ENCODE measurements at regions of chr4 and their contacts with region 1.

Region 1: GRCh38 chr4:86544310-86544966 is 49.7 kb upstream of the PTPN13 start:
- DNase-seq: no peak
- ATAC-seq: no peak
- H3K4me3 ChIP-seq: no peak overlapping the region
- H3K27ac ChIP-seq: peak overlapping the region in 4 of 12 donors; percentile 14 to 67 (median 37)
- H3K4me1 ChIP-seq: peaks cover 0 to 32% (median 8%) of the 10 kb centered on the region in 12 donors
- H3K27me3 ChIP-seq: peaks cover 0 to 7% (median 0%) of the 10 kb centered on the region in 9 donors
- CTCF ChIP-seq: no peak
- POLR2A ChIP-seq: no peak

Region 2: DNA sequence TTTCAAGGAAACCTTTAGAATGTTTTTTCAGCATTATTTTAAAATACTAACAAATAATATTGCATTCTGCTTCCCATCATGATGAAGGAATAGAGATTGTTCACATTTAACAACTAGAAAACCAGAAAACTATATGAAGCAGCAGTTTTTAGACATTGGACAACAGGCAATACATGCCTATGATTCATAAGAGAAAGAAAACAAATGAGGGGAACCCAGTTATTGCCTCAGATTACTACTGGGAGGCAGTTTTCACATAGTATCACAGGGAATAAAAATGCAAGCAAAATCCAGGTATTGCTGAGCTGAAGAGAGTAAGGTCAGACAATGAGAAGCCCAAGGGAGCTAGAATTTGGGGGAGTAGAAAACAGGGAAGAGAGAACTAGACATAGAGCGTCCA is 558.2 kb before region 1 on chr4:
- intact Hi-C with region 1: no loop called
- DNase-seq: no peak
- ATAC-seq: no peak
- H3K4me3 ChIP-seq: no peak overlapping the region
- H3K27ac ChIP-seq: no peak overlapping the region
- H3K4me1 ChIP-seq: no peaks in the 10 kb centered on the region
- H3K27me3 ChIP-seq: no peaks in the 10 kb centered on the region
- CTCF ChIP-seq: no peak
- POLR2A ChIP-seq: no peak

Region 3: DNA sequence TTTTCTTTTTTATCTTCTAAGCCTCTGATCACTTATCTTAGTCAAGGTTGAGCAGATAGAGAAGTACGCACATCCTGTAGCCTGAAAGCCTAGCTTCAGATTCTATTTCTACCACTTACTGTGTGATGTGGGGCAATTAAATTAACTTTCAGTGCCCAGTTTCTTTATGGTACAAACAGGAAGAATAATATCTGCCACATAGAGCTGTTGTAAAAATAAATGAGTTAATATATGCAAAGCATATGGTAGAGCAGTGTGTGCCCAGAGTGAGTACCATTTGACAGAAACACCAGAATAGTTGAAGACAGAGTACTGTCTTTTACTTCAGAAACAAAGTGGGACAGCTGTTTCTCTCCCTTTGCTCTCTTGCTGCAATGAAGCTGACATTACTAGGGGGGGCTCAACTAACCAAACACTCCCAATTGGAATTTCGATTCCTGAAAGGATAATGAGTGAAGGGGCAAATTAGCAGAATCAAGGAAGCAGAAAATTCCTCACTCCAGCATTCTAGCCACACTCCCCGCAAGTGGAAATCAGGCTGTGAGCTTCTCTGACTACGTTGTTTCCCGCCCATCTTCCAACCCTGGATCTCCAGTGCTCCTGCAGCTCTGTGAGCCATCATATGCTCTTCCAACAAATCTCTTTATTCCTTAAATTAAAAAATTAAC is 265.0 kb before region 1 on chr4:
- intact Hi-C with region 1: no loop called
- DNase-seq: no peak
- ATAC-seq: no peak
- H3K4me3 ChIP-seq: no peak overlapping the region
- H3K27ac ChIP-seq: no peak overlapping the region
- H3K4me1 ChIP-seq: no peaks in the 10 kb centered on the region
- H3K27me3 ChIP-seq: no peaks in the 10 kb centered on the region
- CTCF ChIP-seq: no peak
- POLR2A ChIP-seq: no peak

Region 4: DNA sequence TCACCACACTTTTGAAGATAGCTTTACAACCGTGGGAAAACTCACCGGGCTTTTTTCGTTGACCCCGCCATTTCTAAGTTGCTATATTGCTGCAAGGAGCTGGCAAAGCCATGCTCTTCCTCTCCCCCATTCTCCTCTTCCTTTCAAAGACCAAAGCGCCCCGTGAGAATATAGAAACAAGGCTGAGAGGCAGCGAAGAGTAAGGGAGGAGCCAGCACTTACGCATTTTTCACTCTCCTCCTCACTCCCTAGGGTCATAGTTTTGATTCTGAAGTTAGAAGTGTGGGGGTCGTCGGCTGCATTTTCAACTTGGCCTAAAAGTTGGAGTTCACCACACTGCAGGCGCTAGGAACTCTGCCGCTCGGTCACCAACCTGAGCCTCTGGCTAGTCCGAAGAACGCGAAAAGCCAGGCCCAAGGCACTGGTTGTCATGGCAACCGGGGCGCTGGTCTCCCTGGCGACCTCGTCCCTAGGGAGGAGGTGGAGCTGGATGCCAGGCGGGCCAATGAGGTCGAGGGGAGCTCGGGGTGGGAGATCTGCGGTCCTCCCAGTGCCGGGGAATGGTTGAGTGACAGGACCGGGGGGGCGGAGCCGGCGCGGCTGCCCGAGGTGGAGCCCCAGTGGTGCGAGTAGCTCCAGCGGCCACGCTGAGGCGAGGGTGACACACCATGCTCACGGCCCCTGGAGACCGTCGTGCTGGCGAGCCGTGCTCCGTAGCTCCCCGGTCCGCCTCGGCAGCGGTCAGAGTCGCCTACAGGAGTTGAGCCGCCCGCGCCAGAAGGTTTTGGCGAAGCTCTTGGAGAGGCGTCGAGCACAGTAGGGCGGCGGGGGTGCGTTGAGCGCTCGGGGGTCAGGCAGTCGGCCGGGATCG is 49.5 kb after region 1 on chr4 and contains the start of gene PTPN13:
- intact Hi-C with region 1: loop called in 2 of 10 experiments (anchors 5 kb)
- DNase-seq: peak; percentile 91 to 96 (median 94)
- ATAC-seq: peak; percentile 95 to 99 (median 98)
- H3K4me3 ChIP-seq: peak within 1 kb of the TSS; percentile 36 to 74 (median 62)
- H3K27ac ChIP-seq: peak within 1 kb of the TSS; percentile 58 to 88 (median 72)
- H3K4me1 ChIP-seq: peaks cover 0 to 24% (median 4%) of the 10 kb centered on the region in 12 donors
- H3K27me3 ChIP-seq: peaks cover 0 to 29% (median 6%) of the 10 kb centered on the region in 9 donors
- CTCF ChIP-seq: no peak
- POLR2A ChIP-seq: peak in 1 of 2 donors; percentile 88
- total RNA-seq, gene PTPN13: 1.3 to 14.3 (median 4.3) TPM

Measured in heart left ventricle (tissue), 16 donors.